ENCODE measurements at regions of chr14 and their contacts with region 1.

Region 1: DNA sequence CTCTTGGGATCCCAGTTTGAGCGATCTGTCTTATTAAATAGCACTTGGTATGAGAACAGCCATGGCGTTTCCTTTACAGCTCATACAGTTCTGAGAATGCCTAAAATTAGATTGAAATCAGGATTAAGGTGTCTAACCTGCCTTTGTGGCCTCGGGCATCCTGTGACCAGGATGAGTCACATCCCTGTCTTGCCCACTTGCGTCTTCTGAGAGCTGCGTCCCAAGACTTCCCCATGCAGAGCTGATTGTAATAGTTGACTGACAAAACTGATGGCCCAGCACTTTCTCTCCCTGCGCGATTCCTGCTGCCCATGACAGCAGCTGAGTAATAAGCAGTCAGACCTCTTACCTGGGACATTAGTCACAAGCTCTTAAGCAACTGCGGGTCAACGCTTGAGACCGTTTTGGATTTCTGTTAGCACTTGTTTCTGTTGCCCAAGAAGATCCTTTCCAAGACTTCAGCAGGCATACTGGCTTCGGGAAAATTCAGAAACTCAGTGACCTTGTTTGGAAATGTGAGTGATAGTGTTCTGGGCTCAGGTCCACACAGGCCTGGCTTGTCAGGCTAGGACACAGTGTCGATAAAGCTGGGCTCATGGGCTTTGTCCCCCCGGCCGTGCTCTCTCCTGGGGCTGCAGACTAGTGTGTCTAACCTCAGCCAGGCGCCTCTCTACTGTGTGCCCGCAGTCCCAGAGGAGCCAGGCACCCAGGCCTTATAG is 169.9 kb upstream of the HIF1A start:
- DNase-seq: no peak
- ATAC-seq: peak; percentile 33
- H3K4me3 ChIP-seq: no peak overlapping the region
- H3K4me3 Mint-ChIP-seq: no peak overlapping the region
- H3K27ac ChIP-seq: no peak overlapping the region
- H3K27ac Mint-ChIP-seq: no peak overlapping the region
- H3K4me1 ChIP-seq: peaks cover 0 to 12% of the 10 kb centered on the region in 2 donors
- H3K4me1 Mint-ChIP-seq: peaks cover 24% of the 10 kb centered on the region
- H3K27me3 ChIP-seq: no peaks in the 10 kb centered on the region
- H3K27me3 Mint-ChIP-seq: no peaks in the 10 kb centered on the region
- CTCF ChIP-seq: no peak

Region 2: GRCh38 chr14:61493239-61493638 is 32.2 kb before region 1 on chr14:
- CTCF ChIA-PET with region 1: no interaction called
- POLR2A ChIA-PET with region 1: no interaction called
- intact Hi-C with region 1: no loop called
- DNase-seq: no peak
- ATAC-seq: no peak
- H3K4me3 ChIP-seq: no peak overlapping the region
- H3K4me3 Mint-ChIP-seq: no peak overlapping the region
- H3K27ac ChIP-seq: no peak overlapping the region
- H3K27ac Mint-ChIP-seq: no peak overlapping the region
- H3K4me1 ChIP-seq: peaks cover 24 to 29% of the 10 kb centered on the region in 2 donors
- H3K4me1 Mint-ChIP-seq: peaks cover 25% of the 10 kb centered on the region
- H3K27me3 ChIP-seq: no peaks in the 10 kb centered on the region
- H3K27me3 Mint-ChIP-seq: no peaks in the 10 kb centered on the region
- CTCF ChIP-seq: no peak

Region 3: GRCh38 chr14:61511558-61511924 is 13.9 kb before region 1 on chr14:
- CTCF ChIA-PET with region 1: interaction called, 4 read pairs
- POLR2A ChIA-PET with region 1: interaction called, 5 read pairs
- intact Hi-C with region 1: loop called (anchors 2 kb)
- DNase-seq: peak; percentile 30
- ATAC-seq: no peak
- H3K4me3 ChIP-seq: no peak overlapping the region
- H3K4me3 Mint-ChIP-seq: no peak overlapping the region
- H3K27ac ChIP-seq: peak overlapping the region in 1 of 2 donors; percentile 39
- H3K27ac Mint-ChIP-seq: peak overlapping the region; percentile 59
- H3K4me1 ChIP-seq: peaks cover 24 to 44% of the 10 kb centered on the region in 2 donors
- H3K4me1 Mint-ChIP-seq: peaks cover 47% of the 10 kb centered on the region
- H3K27me3 ChIP-seq: no peaks in the 10 kb centered on the region
- H3K27me3 Mint-ChIP-seq: no peaks in the 10 kb centered on the region
- CTCF ChIP-seq: no peak

Region 4: DNA sequence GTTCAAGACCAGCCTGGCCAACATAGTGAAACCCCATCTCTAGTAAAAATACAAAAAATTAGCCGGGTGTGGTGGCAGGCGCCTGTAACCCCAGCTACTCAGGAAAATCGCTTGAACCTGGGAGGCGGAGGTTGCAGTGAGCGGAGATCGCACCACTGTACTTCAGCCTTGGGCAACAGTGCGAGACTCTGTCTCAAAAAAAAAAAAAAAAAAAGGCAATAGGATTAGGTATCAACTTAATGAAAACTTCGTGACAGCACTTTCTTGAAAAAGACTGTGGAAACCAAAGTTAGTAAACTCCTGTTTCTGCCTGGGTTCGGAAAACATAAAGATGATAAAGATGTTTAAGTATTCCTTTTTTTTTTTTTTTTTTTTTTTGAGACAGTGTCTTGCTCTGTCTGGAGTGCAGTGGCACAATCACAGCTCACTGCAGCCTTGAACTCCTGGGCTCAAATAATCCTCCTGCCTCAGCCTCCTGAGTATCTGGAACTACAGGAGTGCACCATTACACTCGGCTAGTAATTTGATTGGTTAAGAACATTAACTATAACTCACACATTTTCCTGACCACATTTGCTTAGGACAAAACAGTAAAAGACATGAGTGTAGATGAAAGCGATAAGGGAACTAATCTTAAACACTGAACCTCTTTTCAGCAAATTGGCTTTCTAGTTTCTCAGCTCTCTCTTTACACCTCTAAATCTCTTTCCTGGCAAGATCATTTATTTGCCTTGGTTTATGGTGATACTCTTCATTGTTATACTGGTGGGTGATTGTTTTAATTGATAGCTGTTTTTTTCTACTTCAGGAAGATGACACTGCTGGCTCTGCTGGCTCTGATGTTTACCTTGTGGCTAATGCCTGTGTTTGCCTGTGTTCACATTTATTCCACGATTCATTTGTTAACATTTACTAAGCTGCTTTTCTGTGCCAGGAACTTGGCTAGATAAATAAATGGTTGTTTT is 185.7 kb after region 1 on chr14:
- CTCF ChIA-PET with region 1: no interaction called
- POLR2A ChIA-PET with region 1: no interaction called
- intact Hi-C with region 1: no loop called
- DNase-seq: peak; percentile 32
- ATAC-seq: peak; percentile 60
- H3K4me3 ChIP-seq: no peak overlapping the region
- H3K4me3 Mint-ChIP-seq: peak overlapping the region; percentile 63
- H3K27ac ChIP-seq: peak overlapping the region in 1 of 2 donors; percentile 17
- H3K27ac Mint-ChIP-seq: peak overlapping the region; percentile 21
- H3K4me1 ChIP-seq: peaks cover 46 to 59% of the 10 kb centered on the region in 2 donors
- H3K4me1 Mint-ChIP-seq: peaks cover 80% of the 10 kb centered on the region
- H3K27me3 ChIP-seq: no peaks in the 10 kb centered on the region
- H3K27me3 Mint-ChIP-seq: no peaks in the 10 kb centered on the region
- CTCF ChIP-seq: no peak